Right cardiac atrium (tissue), 5 donors: ENCODE measurements at regions of chr9 and their contacts with region 1.

Region 1: DNA sequence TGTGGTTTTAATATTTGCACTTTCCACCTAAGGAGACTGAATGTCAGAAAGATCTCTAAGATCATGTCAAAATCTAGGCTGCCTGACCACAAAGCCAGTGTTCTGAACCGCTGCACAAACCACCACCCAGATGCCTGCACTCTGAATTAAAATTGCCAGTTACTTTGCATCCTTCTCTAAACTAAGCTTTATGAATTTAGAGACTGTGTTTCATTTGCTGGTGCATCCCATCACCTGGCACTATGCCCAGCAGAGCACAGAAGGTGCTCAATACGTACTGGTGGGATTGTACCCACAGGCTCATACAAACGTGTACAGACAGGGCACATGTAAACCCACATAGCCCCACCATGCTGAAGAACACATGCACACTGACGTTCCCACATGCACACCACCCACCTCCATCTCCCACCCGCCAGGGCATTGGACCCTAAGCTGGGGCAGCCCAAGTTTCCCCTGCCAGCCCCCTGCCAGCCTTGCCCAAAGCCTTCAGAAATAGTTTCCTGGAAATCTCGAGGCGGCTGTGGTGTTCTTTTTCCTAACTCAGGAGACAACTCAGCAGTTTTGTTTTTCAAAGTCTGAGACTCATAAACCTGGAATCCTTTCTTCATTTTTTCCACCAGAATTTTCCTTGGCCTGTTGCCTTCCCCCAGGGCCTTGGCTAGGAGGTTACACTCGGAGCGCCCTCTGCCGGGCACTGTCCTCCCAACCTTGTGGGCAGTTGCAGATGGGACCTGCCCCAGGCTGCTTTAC is 9.6 kb upstream of the TRAF1 start:
- DNase-seq: peak; percentile 94 to 99 (median 97)
- ATAC-seq: peak; percentile 81 to 84
- H3K4me3 ChIP-seq: no peak overlapping the region
- H3K27ac ChIP-seq: peak overlapping the region; percentile 55
- H3K4me1 ChIP-seq: peaks cover 15% of the 10 kb centered on the region
- H3K27me3 ChIP-seq: no peaks in the 10 kb centered on the region

Region 2: GRCh38 chr9:120755827-120756434 is 180.3 kb before region 1 on chr9:
- intact Hi-C with region 1: loop called in 3 of 4 experiments (anchors 5 to 10 kb)
- DNase-seq: peak in 1 of 3 donors; percentile 56
- ATAC-seq: peak; percentile 59 to 68
- H3K4me3 ChIP-seq: no peak overlapping the region
- H3K27ac ChIP-seq: no peak overlapping the region
- H3K4me1 ChIP-seq: no peaks in the 10 kb centered on the region
- H3K27me3 ChIP-seq: no peaks in the 10 kb centered on the region

Region 3: GRCh38 chr9:120792898-120793765 is 143.1 kb before region 1 on chr9 and contains the start of gene FBXW2:
- intact Hi-C with region 1: loop called in 1 of 4 experiments (anchors 10 kb)
- DNase-seq: peak; percentile 94 to 97 (median 97)
- ATAC-seq: peak; percentile 100
- H3K4me3 ChIP-seq: peak within 1 kb of the TSS; percentile 89
- H3K27ac ChIP-seq: peak within 1 kb of the TSS; percentile 90
- H3K4me1 ChIP-seq: peaks cover 2% of the 10 kb centered on the region
- H3K27me3 ChIP-seq: no peaks in the 10 kb centered on the region
- total RNA-seq, gene FBXW2: 44.5 to 52.5 (median 47.3) TPM

Region 4: DNA sequence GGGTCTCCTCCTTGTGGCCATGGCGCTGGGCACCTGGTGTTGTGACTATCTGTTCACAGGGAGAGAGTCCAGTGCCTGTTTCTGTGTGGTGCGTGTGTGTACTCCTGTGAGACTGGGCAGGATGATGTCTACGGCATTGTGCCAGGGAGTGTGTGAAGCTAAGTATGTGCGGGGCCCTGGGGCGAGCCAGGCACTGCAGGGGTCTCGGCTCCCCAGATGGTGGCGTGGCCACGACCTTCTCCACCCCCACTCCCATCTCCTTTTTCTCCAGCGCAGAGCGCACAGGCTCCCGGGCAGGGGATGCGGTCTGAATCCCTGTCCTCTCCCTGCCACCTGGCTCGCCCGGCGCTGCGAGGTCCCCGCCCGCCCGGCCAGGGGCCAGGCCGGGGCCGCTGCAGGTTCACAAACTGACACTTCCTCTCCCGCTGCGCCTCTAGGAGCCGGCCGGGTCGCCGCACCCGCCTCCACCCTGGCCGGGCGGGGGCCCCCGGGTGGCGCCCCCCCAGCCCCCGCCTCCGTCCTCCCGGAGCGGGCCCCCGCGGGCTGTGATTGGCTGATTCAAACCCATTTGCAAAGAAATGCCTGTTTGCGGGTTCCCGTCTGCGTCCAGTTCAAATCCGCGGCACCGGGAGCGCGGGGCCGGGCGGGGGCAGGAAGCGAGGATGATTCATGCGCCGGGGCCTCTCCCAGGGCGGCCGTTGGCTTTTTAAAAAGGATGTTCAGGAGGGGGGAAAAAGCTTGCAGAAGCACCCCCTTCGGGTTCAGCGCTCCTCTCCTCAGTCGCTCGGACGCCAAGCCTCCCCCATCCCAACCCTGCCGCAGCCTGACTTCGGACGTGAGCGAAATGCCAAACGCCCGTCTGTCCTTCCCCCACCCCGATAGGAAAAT is 60.0 kb before region 1 on chr9:
- intact Hi-C with region 1: loop called in 2 of 4 experiments (anchors 5 kb)
- DNase-seq: peak; percentile 88 to 94 (median 92)
- ATAC-seq: peak; percentile 84 to 89
- H3K4me3 ChIP-seq: peak overlapping the region; percentile 94
- H3K27ac ChIP-seq: peak overlapping the region; percentile 58
- H3K4me1 ChIP-seq: peaks cover 3% of the 10 kb centered on the region
- H3K27me3 ChIP-seq: no peaks in the 10 kb centered on the region

Region 5: DNA sequence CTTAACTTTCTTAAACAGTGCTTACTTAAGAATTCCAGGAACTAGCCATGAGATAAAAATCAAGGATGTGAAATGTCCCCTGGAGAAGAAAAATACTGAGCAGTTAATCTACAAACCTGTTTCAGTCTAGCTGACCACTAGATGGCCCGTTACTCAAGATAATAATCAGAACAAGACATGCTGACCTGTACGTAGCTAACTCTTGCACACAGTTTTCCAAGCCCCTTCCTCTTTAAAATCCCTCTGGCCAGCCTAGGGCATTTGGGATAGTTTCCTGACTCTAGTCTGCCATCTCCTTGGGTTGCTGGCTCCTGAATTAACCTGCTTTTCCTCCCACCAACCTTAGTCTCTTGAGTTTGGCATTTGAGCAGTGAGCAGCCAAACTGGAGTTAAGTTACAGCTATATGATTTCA is 49.6 kb after region 1 on chr9:
- intact Hi-C with region 1: no loop called
- DNase-seq: no peak
- ATAC-seq: peak; percentile 71 to 81
- H3K4me3 ChIP-seq: no peak overlapping the region
- H3K27ac ChIP-seq: no peak overlapping the region
- H3K4me1 ChIP-seq: peaks cover 2% of the 10 kb centered on the region
- H3K27me3 ChIP-seq: no peaks in the 10 kb centered on the region